A673 (cell line): ENCODE measurements at regions of chr11 and their contacts with region 1.

Region 1: DNA sequence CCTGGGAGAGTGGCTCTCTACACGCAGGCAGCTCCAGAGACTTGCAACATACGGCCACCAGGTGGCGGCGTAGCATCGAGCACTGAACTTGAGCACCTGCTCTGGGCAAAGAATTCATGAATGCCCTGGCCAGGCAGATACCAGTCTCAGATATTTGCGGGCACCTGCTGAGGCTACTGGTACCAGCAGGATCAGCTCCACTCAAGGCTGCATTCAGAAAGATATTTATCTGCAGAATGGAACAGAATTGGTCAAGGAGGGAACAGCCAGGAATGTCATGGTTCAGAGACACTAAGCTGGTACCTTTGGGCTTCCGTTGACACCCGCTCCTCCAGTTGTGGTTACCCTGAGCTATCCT is 10.8 kb upstream of the CCDC86 start:
- DNase-seq: peak; percentile 84
- H3K4me3 ChIP-seq: no peak overlapping the region
- H3K27ac ChIP-seq: no peak overlapping the region
- H3K4me1 ChIP-seq: no peaks in the 10 kb centered on the region
- H3K27me3 ChIP-seq: peaks cover 5% of the 10 kb centered on the region
- CTCF ChIP-seq: peak; percentile 97

Region 2: GRCh38 chr11:60887556-60887955 is 56.4 kb after region 1 on chr11:
- CTCF ChIA-PET with region 1: interaction called, 34 read pairs
- POLR2A ChIA-PET with region 1: no interaction called
- intact Hi-C with region 1: loop called (anchors 2 kb)
- DNase-seq: peak; percentile 40
- H3K4me3 ChIP-seq: no peak overlapping the region
- H3K27ac ChIP-seq: no peak overlapping the region
- H3K4me1 ChIP-seq: no peaks in the 10 kb centered on the region
- H3K27me3 ChIP-seq: no peaks in the 10 kb centered on the region
- CTCF ChIP-seq: peak; percentile 50

Region 3: GRCh38 chr11:60906132-60906972 is 75.2 kb after region 1 on chr11 and contains the start of gene PRPF19:
- CTCF ChIA-PET with region 1: interaction called, 3 read pairs
- POLR2A ChIA-PET with region 1: no interaction called
- intact Hi-C with region 1: loop called (anchors 5 kb)
- DNase-seq: peak; percentile 100
- H3K4me3 ChIP-seq: peak within 1 kb of the TSS; percentile 99
- H3K27ac ChIP-seq: peak within 1 kb of the TSS; percentile 98
- H3K4me1 ChIP-seq: peaks cover 18% of the 10 kb centered on the region
- H3K27me3 ChIP-seq: no peaks in the 10 kb centered on the region
- CTCF ChIP-seq: no peak
- total RNA-seq, gene PRPF19: 200 and 204 TPM in 2 replicates

Region 4: DNA sequence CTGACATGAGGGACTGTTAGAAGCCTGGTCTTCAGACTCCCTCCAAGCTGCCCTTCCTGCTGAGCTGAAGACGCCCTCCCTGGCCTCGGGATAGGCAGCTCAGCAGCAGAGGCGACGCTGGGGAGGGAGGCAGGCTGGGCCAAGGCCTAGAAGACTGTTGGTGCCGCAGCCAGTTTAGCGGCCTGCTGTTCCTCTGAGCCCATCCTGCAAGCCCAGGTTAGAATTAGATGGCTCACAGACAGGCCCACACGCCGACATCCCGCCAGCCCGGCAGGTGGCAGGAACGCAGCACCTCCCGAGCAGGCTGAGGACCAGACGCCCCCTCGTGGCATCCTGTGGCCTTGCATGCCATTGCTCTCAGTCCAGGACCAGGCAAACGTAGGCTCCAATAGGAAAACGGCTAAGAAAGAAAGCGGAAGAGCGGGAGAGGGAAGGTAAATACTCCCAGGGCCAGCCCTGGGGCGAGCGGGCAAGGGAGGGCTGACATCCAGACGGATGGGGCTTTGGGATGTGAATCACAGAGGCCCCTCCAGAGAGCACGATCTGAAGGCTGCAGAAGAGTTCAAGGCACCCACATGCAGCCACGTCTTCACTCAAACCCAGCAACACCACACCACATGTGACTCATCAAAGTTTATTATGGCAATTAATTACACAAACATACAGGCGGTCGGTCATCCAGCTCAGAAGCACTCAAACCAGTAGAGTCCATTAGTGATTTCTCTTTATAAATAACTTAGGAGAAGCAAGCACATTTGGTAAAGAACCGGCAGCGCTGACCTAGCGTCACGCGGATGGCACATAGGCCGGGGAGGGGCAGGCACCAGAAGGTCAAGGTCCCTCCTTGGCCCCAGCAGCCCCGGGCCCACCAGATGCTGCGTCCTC is 298.8 kb after region 1 on chr11:
- CTCF ChIA-PET with region 1: no interaction called
- POLR2A ChIA-PET with region 1: no interaction called
- intact Hi-C with region 1: loop called (anchors 1 kb)
- DNase-seq: peak; percentile 92
- H3K4me3 ChIP-seq: no peak overlapping the region
- H3K27ac ChIP-seq: no peak overlapping the region
- H3K4me1 ChIP-seq: peaks cover 4% of the 10 kb centered on the region
- H3K27me3 ChIP-seq: no peaks in the 10 kb centered on the region
- CTCF ChIP-seq: peak; percentile 100

Region 5: GRCh38 chr11:61173456-61173855 is 342.3 kb after region 1 on chr11:
- CTCF ChIA-PET with region 1: interaction called, 4 read pairs
- POLR2A ChIA-PET with region 1: no interaction called
- intact Hi-C with region 1: loop called (anchors 2 kb)
- DNase-seq: peak; percentile 63
- H3K4me3 ChIP-seq: no peak overlapping the region
- H3K27ac ChIP-seq: no peak overlapping the region
- H3K4me1 ChIP-seq: no peaks in the 10 kb centered on the region
- H3K27me3 ChIP-seq: peaks cover 27% of the 10 kb centered on the region
- CTCF ChIP-seq: peak; percentile 57

Region 6: DNA sequence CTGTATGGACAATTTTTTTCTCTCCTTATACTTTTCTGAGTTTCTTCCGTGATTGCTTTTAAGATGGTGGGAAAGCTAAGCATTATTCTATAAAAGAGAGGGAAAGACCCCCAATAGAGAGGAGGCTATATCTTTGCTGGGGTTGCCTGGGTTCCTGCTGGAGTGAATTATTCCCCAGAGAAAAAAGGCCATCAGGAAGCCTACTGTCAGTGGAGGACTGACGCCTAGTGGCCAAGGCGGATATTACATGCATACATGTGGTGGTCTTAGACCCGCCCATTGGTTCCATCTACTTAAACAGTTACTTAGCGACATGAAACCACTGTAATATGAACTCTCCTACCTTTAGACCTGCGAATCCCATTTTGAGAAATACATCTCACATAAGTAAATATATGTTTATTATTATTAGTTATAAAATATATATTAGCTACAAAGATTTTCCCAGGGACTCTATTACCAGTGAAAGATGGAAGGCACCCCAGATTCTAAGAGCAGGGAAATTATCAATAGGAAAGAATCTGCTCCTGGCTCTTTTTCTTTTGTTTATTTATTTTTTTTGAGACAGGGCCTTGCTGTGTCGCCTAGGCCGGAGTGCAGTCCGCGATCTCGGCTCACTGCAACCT is 356.5 kb after region 1 on chr11:
- CTCF ChIA-PET with region 1: interaction called, 3 read pairs
- POLR2A ChIA-PET with region 1: no interaction called
- intact Hi-C with region 1: loop called (anchors 5 kb)
- DNase-seq: peak; percentile 91
- H3K4me3 ChIP-seq: no peak overlapping the region
- H3K27ac ChIP-seq: no peak overlapping the region
- H3K4me1 ChIP-seq: no peaks in the 10 kb centered on the region
- H3K27me3 ChIP-seq: no peaks in the 10 kb centered on the region
- CTCF ChIP-seq: peak; percentile 95